ENCODE measurements at regions of chr12 and their contacts with region 1.

Region 1: DNA sequence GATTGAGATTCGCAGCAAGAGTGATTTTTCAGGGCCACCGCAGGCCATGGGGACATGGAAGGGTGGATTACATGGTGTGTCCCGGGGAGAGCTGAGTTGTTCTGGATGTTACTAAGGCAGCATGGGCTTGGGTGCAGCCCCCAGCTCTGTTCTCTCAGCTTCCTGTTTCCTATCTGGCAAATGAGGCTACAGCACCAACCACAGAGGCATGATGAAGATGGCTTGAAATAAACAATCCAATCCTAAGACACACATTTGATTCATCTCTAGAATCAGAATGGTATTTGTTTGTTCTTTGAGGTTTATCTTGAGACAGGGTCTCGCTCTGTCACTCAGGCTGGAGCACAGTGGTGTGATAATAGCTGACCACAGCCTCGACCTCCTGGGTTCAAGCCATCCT is 21.6 kb downstream of the GLTP start:
- H3K4me3 Mint-ChIP-seq: no peak overlapping the region
- H3K27ac Mint-ChIP-seq: no peak overlapping the region
- H3K4me1 Mint-ChIP-seq: peaks cover under 1% of the 10 kb centered on the region
- H3K27me3 Mint-ChIP-seq: no peaks in the 10 kb centered on the region

Region 2: GRCh38 chr12:109880016-109880931 is 21.5 kb after region 1 on chr12 and contains the start of gene GLTP:
- intact Hi-C with region 1: loop called (anchors 1 kb)
- H3K4me3 Mint-ChIP-seq: peak within 1 kb of the TSS; percentile 93
- H3K27ac Mint-ChIP-seq: peak within 1 kb of the TSS; percentile 89
- H3K4me1 Mint-ChIP-seq: peaks cover 55% of the 10 kb centered on the region
- H3K27me3 Mint-ChIP-seq: peaks cover 4% of the 10 kb centered on the region

Region 3: DNA sequence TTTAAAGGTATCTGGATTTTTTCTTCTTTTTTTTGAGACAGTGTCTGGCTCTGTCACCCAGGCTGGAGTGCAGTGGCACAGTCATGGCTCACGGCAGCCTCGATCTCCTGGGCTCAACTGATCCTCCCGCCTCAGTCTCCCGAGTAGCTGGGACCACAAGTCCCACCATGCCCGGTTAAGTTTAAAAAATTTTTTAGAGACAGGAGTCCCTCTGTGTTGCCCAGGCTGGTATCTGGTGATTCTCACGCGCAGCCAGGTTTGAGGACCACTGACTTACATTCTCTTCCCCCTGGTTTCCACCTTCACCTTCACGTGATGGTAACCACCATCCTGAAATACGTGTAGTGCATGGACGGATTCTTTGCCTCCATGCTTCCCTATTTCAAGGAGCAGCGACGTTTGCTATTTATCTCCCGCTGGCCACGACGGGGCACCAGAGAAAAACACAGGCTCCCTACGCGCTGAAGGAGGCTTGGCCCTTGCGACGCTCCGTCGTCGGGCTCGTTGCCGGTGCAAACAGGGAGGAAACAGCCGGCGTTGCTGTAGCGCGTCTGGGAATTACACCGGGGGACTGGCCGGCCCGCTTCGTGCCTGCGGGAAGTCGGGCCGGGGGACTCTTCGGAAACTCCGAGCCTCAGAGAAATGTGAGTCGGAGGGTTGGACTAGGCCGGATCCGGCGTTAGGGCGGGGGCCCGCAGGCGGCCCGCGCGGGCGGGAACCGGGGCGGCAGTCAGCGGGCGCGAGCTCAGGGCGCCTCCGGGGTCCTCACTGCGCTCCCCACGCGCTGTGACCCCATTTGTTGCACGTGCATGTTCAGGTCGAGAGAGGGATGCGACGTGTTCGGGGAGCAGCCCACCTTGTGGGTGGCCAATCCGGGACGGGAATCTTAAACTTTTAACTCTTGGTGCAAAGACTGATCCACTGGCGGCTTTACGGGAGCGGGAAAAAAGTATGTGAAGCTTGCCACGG is 41.3 kb after region 1 on chr12 and contains the start of gene TCHP:
- intact Hi-C with region 1: loop called (anchors 10 kb)
- H3K4me3 Mint-ChIP-seq: peak within 1 kb of the TSS; percentile 94
- H3K27ac Mint-ChIP-seq: peak within 1 kb of the TSS; percentile 94
- H3K4me1 Mint-ChIP-seq: peaks cover 24% of the 10 kb centered on the region
- H3K27me3 Mint-ChIP-seq: no peaks in the 10 kb centered on the region

Region 4: GRCh38 chr12:109930028-109930800 is 71.5 kb after region 1 on chr12:
- intact Hi-C with region 1: loop called (anchors 2 kb)
- H3K4me3 Mint-ChIP-seq: no peak overlapping the region
- H3K27ac Mint-ChIP-seq: no peak overlapping the region
- H3K4me1 Mint-ChIP-seq: no peaks in the 10 kb centered on the region
- H3K27me3 Mint-ChIP-seq: no peaks in the 10 kb centered on the region